Dorsolateral prefrontal cortex (tissue), 120 donors: ENCODE measurements at regions of chr19 and their contacts with region 1.

Region 1: GRCh38 chr19:11125994-11126685 is 29.4 kb downstream of the SPC24 start:
- DNase-seq: peak; percentile 69 to 87 (median 76)
- H3K4me3 ChIP-seq: peak overlapping the region in 1 of 59 donors; percentile 26
- H3K27ac ChIP-seq: peak overlapping the region in 34 of 59 donors; percentile 13 to 71 (median 36)
- H3K27me3 ChIP-seq: no peaks in the 10 kb centered on the region
- CTCF ChIP-seq: peak; percentile 59 to 89 (median 80)

Region 2: GRCh38 chr19:11035441-11036377 is 90.4 kb before region 1 on chr19:
- intact Hi-C with region 1: loop called (anchors 2 to 10 kb)
- DNase-seq: peak; percentile 68 to 86 (median 80)
- H3K4me3 ChIP-seq: no peak overlapping the region
- H3K27ac ChIP-seq: peak overlapping the region in 27 of 59 donors; percentile 13 to 66 (median 31)
- H3K27me3 ChIP-seq: no peaks in the 10 kb centered on the region
- CTCF ChIP-seq: peak; percentile 55 to 89 (median 79)

Region 3: DNA sequence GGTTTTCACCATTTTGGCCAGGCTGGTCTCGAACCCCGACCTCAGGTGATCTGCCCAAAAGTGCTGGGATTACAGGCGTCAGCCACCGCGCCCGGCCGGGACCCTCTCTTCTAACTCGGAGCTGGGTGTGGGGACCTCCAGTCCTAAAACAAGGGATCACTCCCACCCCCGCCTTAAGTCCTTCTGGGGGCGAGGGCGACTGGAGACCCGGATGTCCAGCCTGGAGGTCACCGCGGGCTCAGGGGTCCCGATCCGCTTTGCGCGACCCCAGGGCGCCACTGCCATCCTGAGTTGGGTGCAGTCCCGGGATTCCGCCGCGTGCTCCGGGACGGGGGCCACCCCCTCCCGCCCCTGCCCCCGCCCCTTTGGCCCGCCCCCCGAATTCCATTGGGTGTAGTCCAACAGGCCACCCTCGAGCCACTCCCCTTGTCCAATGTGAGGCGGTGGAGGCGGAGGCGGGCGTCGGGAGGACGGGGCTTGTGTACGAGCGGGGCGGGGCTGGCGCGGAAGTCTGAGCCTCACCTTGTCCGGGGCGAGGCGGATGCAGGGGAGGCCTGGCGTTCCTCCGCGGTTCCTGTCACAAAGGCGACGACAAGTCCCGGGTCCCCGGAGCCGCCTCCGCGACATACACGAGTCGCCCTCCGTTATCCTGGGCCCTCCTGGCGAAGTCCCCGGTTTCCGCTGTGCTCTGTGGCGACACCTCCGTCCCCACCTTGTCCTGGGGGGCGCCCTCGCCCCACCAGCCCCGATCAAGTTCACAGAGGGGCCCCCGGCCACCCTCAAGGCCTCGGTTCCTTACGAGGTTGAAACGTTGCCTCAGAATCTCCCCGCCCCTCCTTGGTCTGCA is 35.9 kb before region 1 on chr19:
- intact Hi-C with region 1: loop called in 1 of 2 experiments (anchors 5 kb)
- DNase-seq: peak; percentile 94 to 99 (median 98)
- H3K4me3 ChIP-seq: peak overlapping the region; percentile 55 to 99 (median 86)
- H3K27ac ChIP-seq: peak overlapping the region; percentile 83 to 99 (median 98)
- H3K27me3 ChIP-seq: no peaks in the 10 kb centered on the region
- CTCF ChIP-seq: peak in 14 of 56 donors; percentile 2 to 42 (median 12)

Region 4: DNA sequence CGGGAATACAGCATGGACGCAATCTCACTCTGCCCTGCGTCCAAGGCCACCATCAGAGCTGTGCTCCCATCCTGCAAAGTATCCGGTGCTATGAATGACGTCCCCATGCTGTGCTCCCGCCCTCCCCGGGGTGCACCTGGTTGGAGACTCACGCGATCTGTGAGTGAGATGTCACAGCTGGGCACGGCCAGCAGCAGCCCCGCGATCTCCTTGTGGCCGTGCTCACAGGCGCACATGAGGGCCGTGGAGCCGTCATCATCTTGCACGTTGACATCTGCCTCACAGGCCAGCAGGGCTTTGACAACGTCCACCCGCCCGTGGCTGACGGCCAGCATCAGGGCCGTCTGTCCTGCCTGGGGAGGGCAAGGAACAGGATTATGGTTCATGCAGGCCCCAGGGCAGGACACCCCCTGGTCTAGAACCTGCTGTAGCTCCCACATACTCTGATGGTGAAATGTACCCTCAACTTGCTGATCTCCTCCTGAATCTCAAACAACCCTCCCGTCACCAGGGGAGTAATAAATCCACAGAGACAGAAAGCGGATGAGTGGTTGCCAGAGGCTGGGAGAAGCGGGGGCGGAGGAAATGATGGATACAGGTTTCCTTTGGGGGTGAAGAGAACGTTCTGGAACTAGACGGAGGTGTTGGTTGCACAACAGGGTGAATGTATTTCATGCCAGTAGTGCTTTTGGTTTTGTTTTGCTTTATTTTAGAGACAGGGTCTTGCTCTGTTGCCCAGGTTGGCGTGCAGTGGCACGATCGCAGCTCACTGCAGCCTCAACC is 43.9 kb after region 1 on chr19:
- intact Hi-C with region 1: no loop called
- DNase-seq: no peak
- H3K4me3 ChIP-seq: no peak overlapping the region
- H3K27ac ChIP-seq: no peak overlapping the region
- H3K27me3 ChIP-seq: no peaks in the 10 kb centered on the region
- CTCF ChIP-seq: no peak

Region 5: DNA sequence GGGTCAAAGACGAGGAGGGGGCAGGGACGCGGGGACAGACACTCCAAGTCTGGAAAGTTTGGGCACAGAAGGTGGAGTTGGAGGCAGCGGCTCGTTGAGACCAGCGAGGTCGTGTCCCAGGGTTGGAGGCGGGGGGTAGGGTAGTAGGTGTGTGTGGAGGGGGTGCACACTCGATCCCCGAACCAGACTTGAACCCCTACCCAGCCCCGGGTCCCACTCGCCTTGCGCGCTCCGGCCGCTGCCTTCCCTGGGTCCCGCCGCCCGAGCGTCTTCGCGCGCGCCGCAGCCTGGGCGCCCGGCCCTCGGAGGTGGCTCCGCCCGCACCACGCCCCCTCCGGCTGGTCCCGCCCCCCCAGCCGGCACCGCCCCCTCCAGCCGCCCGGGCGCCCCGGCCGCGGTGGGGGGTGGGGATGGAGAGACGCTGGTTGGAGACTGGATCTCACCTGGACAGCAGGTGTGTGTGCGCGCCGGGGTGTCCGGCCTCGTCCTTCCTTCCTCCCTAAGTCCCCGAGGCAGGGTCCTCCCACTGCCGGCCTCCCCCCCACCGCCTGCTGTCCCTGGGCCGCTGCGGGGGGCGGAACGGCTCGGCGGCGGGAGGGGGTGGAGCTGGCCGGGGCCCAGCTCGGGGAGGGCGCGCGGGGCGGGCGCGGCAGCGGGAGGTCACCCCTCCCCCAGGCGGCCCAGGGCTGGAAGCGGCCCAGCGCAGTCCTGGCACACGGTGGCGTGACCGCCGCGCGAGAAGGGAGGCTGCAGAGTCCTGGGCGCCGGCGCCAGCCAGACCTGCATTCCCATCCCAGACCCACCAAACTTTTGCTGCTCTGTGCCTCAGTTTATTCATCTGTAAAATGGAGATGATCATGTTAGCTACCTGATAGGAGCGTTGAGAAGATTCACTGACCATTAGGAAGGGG is 71.4 kb after region 1 on chr19 and contains the start of gene KANK2:
- intact Hi-C with region 1: no loop called
- DNase-seq: peak; percentile 36 to 87 (median 64)
- H3K4me3 ChIP-seq: peak within 1 kb of the TSS; percentile 48 to 82 (median 68)
- H3K27ac ChIP-seq: peak within 1 kb of the TSS in 58 of 59 donors; percentile 36 to 92 (median 80)
- H3K27me3 ChIP-seq: no peaks in the 10 kb centered on the region
- CTCF ChIP-seq: peak in 19 of 56 donors; percentile 6 to 44 (median 23)
- total RNA-seq, gene KANK2: 13.8 to 97.3 (median 30.1) TPM